ENCODE measurements at regions of chr15 and their contacts with region 1.

Region 1: GRCh38 chr15:90362936-90363212 is 10.8 kb downstream of the ZNF774 start:
- DNase-seq: peak; percentile 21 to 71
- H3K4me3 ChIP-seq: no peak overlapping the region
- H3K27ac ChIP-seq: peak overlapping the region; percentile 94
- H3K4me1 ChIP-seq: peaks cover 47% of the 10 kb centered on the region
- H3K27me3 ChIP-seq: no peaks in the 10 kb centered on the region
- CTCF ChIP-seq: no peak

Region 2: GRCh38 chr15:89750560-89751542 is 612.0 kb before region 1 on chr15 and contains the start of gene MESP1:
- CTCF ChIA-PET with region 1: no interaction called
- POLR2A ChIA-PET with region 1: no interaction called
- intact Hi-C with region 1: no loop called
- DNase-seq: peak; percentile 81 to 92
- H3K4me3 ChIP-seq: peak within 1 kb of the TSS; percentile 78
- H3K27ac ChIP-seq: peak within 1 kb of the TSS; percentile 99
- H3K4me1 ChIP-seq: peaks cover 59% of the 10 kb centered on the region
- H3K27me3 ChIP-seq: no peaks in the 10 kb centered on the region
- CTCF ChIP-seq: peak; percentile 72
- total RNA-seq, gene MESP1: 8.5 and 17.8 TPM in 2 replicates

Region 3: DNA sequence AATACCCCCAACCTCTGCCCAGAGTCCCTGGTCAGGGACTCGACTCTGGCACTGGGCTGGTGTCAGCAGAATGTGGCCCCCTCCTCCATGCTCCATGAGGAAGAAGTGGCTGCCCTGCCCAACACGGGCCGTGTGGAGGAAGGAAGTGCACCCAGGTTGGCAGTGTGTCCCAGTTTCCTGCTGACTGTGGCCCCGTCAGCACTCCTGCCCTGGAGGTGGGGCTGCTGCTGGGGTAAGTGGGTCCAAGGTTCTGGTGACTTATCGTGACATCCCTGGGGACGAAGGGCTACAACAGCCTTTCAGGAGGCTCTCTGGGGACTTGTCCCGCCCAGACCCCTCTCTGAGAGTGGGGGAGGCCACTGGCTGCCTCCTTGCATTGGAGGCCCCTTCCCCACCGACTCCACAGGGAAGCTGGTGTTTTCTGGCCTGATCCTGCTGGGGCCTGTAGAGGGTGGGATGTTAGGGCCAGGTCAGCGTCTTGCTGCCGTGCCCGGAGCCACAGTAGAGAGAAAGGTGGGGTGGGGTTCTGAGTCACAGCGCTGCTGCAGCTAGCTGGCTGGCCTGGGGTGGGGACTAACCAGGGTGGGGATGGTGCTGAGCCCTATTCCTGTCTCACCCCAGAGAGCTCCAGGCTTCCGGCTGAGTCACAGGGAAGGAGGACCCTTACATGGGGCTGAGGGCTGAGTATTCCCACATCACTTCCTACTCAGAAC is 151.3 kb before region 1 on chr15:
- CTCF ChIA-PET with region 1: no interaction called
- POLR2A ChIA-PET with region 1: no interaction called
- intact Hi-C with region 1: no loop called
- DNase-seq: peak; percentile 89 to 90
- H3K4me3 ChIP-seq: peak overlapping the region; percentile 51; the same call in 1 of the 2 replicates
- H3K27ac ChIP-seq: peak overlapping the region; percentile 99
- H3K4me1 ChIP-seq: peaks cover 88% of the 10 kb centered on the region
- H3K27me3 ChIP-seq: no peaks in the 10 kb centered on the region
- CTCF ChIP-seq: no peak

Region 4: GRCh38 chr15:90336705-90337141 is 26.2 kb before region 1 on chr15:
- CTCF ChIA-PET with region 1: no interaction called
- POLR2A ChIA-PET with region 1: no interaction called
- intact Hi-C with region 1: loop called (anchors 1 kb)
- DNase-seq: peak in 1 of 2 experiments; percentile 96
- H3K4me3 ChIP-seq: no peak overlapping the region
- H3K27ac ChIP-seq: peak overlapping the region; percentile 74
- H3K4me1 ChIP-seq: peaks cover 45% of the 10 kb centered on the region
- H3K27me3 ChIP-seq: no peaks in the 10 kb centered on the region
- CTCF ChIP-seq: no peak

Region 5: GRCh38 chr15:90382305-90382704 is 19.4 kb after region 1 on chr15:
- CTCF ChIA-PET with region 1: interaction called, 6 read pairs
- POLR2A ChIA-PET with region 1: interaction called, 21 read pairs
- intact Hi-C with region 1: no loop called
- DNase-seq: no peak
- H3K4me3 ChIP-seq: no peak overlapping the region
- H3K27ac ChIP-seq: no peak overlapping the region
- H3K4me1 ChIP-seq: 0 out of 2 replicates have a peak, but pooled peaks cover under 1% of the 10 kb centered on the region
- H3K27me3 ChIP-seq: no peaks in the 10 kb centered on the region
- CTCF ChIP-seq: no peak

Region 6: GRCh38 chr15:91150502-91151160 is 787.8 kb after region 1 on chr15:
- CTCF ChIA-PET with region 1: no interaction called
- POLR2A ChIA-PET with region 1: no interaction called
- intact Hi-C with region 1: no loop called
- DNase-seq: no peak
- H3K4me3 ChIP-seq: no peak overlapping the region
- H3K27ac ChIP-seq: no peak overlapping the region
- H3K4me1 ChIP-seq: no peaks in the 10 kb centered on the region
- H3K27me3 ChIP-seq: peaks cover 8% of the 10 kb centered on the region; the same call in 1 of the 2 replicates
- CTCF ChIP-seq: no peak